ENCODE measurements at regions of chr3 and their contacts with region 1.

Region 1: GRCh38 chr3:114827495-114827894 is 319.6 kb downstream of the ZBTB20 start:
- DNase-seq: no peak

Region 2: GRCh38 chr3:114383875-114384557 is 443.5 kb before region 1 on chr3:
- intact Hi-C with region 1: loop called (anchors 10 kb)
- DNase-seq: peak; percentile 78 to 98 (median 88)

Region 3: DNA sequence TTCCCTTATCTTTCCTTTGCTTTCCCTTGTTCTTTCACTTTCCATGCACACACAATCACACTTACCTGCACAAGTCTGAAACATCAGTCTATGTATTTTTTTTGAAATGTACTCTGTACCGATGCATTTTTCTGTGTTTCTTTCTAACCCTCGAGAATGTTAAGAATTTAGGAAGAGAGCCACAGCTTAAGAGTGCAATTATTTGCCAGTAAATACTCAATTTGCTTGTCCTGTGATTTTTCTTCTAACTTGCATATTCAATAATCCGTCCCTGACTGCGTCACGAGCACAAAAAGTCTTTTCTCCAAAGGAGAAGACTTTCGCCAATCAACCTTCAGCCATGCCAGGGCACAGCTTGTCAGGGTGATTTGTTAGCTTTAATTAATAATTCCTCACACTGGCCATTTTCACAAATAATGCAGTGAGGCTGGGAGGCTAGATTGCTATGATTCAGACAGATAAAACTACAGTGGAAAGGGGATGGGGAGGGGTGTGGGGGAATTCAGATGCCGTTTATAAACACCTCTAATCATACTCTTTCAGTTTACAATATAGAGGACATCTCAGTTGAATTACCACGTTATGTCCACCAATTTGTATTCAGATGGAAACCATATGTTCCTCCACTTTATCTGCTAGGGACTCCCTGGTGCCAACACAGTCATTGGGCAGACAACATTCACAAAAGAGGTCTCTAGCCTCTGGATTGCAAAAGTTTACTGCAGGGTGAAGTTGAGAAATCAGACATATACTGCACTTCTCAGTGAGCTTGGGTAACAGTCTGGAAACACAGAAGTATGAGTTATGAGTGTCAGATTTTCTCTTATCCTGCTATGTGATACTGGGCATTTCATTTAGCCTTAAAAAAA is 68.4 kb before region 1 on chr3:
- intact Hi-C with region 1: no loop called
- DNase-seq: peak in 1 of 10 donors; percentile 11

Region 4: GRCh38 chr3:115092220-115092791 is 264.8 kb after region 1 on chr3:
- intact Hi-C with region 1: loop called (anchors 5 kb)
- DNase-seq: peak; percentile 52 to 96 (median 74)

Region 5: DNA sequence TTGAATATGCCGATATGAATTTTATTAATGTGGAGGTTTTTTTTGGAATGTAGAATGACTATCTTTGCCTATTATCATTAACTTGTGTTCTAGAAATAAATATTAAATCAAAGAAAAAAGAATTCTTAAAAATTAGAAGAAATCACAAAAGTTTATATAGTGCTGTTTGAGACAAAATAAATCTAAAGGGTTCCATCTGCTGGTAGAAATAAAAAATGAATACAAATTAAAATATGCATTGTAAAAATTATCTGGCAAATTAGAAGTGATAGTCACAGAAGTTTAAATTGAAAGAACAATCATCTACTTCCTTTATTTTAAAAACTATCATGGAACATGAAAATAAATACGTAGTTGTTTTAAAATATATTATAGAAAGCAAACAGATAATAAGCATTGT is 342.3 kb after region 1 on chr3:
- intact Hi-C with region 1: loop called (anchors 5 kb)
- DNase-seq: no peak

Measured in posterior cingulate gyrus (tissue), 11 donors.